ENCODE measurements at regions of chr1 and their contacts with region 1.

Region 1: DNA sequence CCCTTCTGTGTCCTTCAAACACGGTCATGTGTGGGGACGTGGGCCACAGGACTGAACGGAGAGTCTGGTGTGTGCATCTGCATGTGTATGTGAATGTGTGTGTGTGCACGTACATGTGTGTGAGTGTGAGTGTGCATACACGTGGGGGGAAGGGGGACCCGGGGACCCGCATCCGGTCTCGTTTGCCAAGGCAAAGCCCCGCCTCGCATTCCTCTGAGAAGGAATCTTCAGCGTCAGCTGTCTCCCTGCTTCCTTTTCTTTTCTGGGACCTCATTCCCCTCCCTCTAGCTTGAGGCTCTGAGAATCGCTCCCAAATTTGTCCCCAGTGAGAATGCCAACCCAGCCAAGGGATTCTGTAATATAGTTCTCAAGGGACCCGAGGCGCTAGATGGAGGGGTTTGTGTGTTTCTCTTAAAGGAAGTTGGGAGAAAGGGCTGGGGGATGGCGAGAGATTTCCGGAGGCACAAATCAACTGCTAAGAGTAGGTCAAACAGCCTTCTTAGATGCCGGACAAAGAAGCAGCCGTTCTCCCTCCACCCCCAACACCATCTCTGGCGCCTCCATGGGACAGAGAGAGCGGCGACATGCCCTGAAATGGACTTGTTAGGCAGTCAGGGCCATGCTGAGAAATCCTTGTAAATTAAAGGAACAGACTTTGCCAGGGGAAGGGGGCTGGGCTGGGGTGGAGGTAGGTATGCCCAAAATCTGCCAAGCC is 6.6 kb downstream of the IFFO2 start:
- DNase-seq: peak; percentile 72 to 88
- H3K4me3 ChIP-seq: peak overlapping the region; percentile 46 to 51
- H3K27ac ChIP-seq: peak overlapping the region; percentile 94 to 98
- H3K4me1 ChIP-seq: peaks cover 4 to 98% (median 85%) of the 10 kb centered on the region in 4 donors
- H3K27me3 ChIP-seq: no peaks in the 10 kb centered on the region
- CTCF ChIP-seq: peak; percentile 41 to 45

Region 2: DNA sequence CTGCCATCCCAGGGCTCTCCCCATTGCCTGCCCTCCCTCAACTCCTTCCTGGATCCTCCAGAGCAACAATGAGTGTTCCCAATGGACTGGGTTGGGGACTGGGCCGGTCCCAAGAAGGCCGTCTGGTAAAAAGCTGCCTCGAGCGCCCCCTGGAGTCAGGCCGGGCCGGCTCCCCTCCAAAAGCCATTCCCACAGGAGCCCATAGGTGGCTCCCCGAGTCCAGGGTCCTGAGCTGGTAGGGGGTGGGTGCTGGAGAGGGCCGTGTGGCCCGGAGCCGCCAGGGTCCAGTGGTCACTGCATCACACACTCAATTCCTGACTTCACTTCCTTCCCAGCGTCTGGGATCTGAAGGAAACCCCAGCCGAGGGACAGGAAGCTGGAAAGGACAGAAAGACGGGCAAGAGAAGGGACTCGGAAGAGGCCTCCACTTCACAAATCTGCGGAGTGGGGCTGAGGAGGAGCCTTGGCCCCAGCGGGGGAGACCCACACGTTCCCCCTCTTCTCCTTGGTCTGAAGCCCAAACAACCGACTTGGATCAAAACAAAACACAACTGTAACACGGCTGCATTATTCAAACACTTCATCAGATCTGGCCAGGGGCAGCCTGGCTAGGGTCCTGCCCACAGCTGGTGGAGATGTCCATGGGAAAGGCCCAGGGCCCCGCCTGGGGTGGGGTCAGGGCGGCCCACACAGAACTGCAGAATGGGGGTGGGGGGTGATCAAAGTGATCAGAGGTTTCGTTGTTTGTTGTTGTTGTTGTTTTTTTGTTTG is 36.6 kb before region 1 on chr1:
- intact Hi-C with region 1: loop called (anchors 5 kb)
- DNase-seq: peak; percentile 82 to 89
- H3K4me3 ChIP-seq: no peak overlapping the region
- H3K27ac ChIP-seq: peak overlapping the region; percentile 72 to 75
- H3K4me1 ChIP-seq: peaks cover 0 to 37% (median 26%) of the 10 kb centered on the region in 4 donors
- H3K27me3 ChIP-seq: no peaks in the 10 kb centered on the region
- CTCF ChIP-seq: peak; percentile 77 to 79

Region 3: DNA sequence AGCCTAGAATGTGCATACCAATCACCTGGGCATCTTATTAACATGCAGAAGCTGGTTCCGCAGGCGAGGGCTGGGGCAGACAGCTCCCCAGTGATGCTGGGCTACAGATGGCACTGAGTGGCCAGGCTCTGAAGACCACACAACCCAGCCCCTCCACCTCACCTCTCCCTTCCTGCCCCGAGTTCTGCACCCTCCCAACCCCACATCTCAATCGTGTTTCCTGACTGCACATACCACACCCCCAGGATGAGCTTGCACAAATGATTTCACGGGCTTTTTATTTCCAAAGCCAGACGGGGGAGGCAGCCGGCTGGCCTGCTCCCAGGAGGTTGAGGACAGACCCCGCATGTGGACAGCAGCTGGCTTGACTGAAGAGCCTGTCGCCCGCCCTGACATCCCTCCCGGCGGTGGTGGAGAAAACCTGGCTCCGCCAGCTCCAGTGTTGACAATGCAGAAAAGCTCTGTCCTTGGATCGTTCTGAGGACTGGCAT is 26.1 kb before region 1 on chr1:
- intact Hi-C with region 1: loop called (anchors 2 kb)
- DNase-seq: no peak
- H3K4me3 ChIP-seq: peak overlapping the region; percentile 23 to 45
- H3K27ac ChIP-seq: peak overlapping the region; percentile 86 to 95
- H3K4me1 ChIP-seq: peaks cover 22 to 72% (median 67%) of the 10 kb centered on the region in 4 donors
- H3K27me3 ChIP-seq: no peaks in the 10 kb centered on the region
- CTCF ChIP-seq: no peak

Measured in tibial artery (tissue), 4 donors.